Activated T-helper 1 cell treated with anti-CD3 and anti-CD28 coated beads, Interleukin-12 subunit alpha, Interleukin-12 subunit beta, Interleukin-2, Interleukin-4 antibody, amounts not matched to agents 30 ng/mL and 10 ng/mL and 1 ng/mL, durations not matched to agents 14 hours and 24 hours and 36 hours (primary cell): ENCODE measurements at regions of chr9 and their contacts with region 1.

Region 1: GRCh38 chr9:4792572-4793458 is at the start of gene RCL1:
- DNase-seq: peak; percentile 99
- H3K4me3 Mint-ChIP-seq: peak within 1 kb of the TSS; percentile 96
- H3K27ac Mint-ChIP-seq: peak within 1 kb of the TSS; percentile 96
- H3K4me1 Mint-ChIP-seq: peaks cover 62% of the 10 kb centered on the region
- H3K27me3 Mint-ChIP-seq: no peaks in the 10 kb centered on the region
- total RNA-seq, gene RCL1: 53.3 and 53.4 TPM in 2 replicates

Region 2: DNA sequence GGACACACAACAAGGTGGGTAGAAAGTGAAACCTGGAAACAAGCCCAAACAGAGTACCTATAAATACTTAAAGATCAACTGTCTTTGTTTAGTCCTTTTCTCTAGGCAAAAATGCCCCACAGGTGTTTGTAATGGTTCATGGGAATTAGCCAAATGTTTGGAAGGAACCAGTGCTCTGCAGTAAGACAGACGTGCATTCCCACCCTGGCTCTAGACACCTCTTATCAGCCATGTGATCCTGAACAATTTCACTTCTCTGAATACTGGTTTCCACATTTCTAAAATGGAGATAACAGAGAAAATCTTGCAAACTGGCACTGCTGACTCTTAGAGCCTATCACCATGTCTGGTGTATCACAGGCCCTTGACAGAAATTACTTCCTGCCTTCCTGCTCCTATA is 523.0 kb before region 1 on chr9:
- intact Hi-C with region 1: no loop called
- DNase-seq: no peak
- H3K4me3 Mint-ChIP-seq: no peak overlapping the region
- H3K27ac Mint-ChIP-seq: no peak overlapping the region
- H3K4me1 Mint-ChIP-seq: no peaks in the 10 kb centered on the region
- H3K27me3 Mint-ChIP-seq: no peaks in the 10 kb centered on the region

Region 3: DNA sequence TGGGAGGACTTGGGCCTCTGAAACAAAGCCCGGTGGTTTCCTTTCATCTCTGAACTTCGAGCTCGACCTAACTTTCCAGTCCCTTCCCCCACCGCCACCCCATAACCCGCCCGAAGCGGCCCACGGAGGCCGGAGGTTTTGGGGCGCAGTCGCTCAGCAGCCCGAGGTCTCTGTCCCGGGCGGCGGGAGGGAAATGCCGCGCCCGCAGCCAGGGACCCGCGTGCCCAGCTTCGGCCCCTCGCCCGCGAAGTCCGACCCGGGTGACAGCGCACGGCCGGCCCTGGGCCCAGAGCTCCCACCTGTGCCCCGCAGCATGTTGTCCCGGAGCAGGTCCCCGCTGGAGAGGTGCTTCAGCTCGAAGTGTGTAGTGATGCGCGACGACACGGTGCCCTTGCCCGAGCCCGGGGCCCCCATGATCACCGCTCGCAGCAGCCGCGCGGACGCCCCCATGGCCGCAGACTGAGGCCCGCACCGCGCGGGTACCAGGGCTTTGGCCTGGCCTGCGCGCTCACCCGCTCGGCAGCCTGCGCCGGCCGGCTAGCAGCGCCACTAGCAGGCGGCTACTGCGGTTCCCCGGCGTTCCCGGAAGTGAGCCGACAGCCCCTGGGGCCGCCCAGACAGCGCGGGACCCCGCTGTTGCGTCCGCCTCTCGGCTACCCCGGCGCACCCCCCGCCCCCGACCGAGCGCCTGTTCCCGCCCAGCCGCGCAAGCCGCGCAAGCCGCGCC is 52.0 kb before region 1 on chr9 and contains the start of gene AK3:
- intact Hi-C with region 1: loop called (anchors 1 kb)
- DNase-seq: peak; percentile 81
- H3K4me3 Mint-ChIP-seq: peak within 1 kb of the TSS; percentile 89
- H3K27ac Mint-ChIP-seq: peak within 1 kb of the TSS; percentile 92
- H3K4me1 Mint-ChIP-seq: peaks cover 29% of the 10 kb centered on the region
- H3K27me3 Mint-ChIP-seq: no peaks in the 10 kb centered on the region
- total RNA-seq, gene AK3: 23.9 and 28.5 TPM in 2 replicates

Region 4: GRCh38 chr9:4762108-4762885 is 30.5 kb before region 1 on chr9:
- intact Hi-C with region 1: loop called (anchors 1 kb)
- DNase-seq: peak; percentile 72
- H3K4me3 Mint-ChIP-seq: peak overlapping the region; percentile 68
- H3K27ac Mint-ChIP-seq: peak overlapping the region; percentile 65
- H3K4me1 Mint-ChIP-seq: peaks cover 18% of the 10 kb centered on the region
- H3K27me3 Mint-ChIP-seq: no peaks in the 10 kb centered on the region

Region 5: GRCh38 chr9:4866239-4866969 is 73.6 kb after region 1 on chr9:
- intact Hi-C with region 1: loop called (anchors 1 kb)
- DNase-seq: no peak
- H3K4me3 Mint-ChIP-seq: peak overlapping the region; percentile 45
- H3K27ac Mint-ChIP-seq: peak overlapping the region; percentile 90
- H3K4me1 Mint-ChIP-seq: peaks cover 36% of the 10 kb centered on the region
- H3K27me3 Mint-ChIP-seq: no peaks in the 10 kb centered on the region

Region 6: DNA sequence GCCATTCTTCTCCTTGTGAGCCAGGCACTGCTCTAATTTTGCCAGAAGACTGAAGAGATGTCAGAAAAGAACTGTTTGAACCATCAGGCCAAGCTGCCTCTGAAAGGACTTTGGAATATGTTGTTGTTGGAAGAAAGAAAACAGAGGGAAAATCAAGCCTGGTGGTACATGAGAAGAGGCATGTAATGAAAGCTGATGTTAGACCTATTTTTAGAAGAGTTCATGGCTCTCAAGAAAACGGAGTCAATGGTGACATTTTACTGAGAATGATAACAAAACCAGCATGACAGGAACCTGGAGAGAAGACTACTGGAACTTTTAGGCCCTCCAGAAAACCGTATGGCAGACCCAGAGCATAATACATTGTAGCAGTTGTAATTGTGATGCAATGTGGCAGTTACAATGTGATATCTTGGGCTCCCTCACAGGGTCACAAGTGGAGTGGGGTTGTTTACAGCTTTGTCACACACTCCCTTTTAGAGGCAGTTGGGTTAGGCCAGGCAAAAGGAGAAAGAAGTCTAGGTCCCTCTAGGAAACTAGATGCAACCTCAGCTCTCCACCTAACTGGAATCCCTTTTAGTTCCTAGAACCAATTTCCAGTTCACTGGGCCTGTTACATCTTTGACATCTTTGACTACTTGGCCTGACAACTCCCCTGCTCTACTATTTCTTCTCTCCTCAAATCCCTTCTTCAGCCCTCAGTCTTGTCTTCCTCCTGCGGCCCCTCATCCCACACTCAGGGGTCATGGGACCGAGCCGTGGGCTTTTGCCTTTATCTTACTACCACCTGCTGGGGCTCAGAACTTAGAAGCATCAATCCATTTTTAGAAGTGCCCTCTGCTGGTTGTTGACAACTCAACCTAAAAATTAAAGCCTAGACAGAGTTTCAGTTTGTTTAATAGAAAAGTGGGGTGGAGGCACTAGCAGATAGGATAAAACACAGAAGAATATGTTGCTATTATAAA is 131.0 kb after region 1 on chr9:
- intact Hi-C with region 1: loop called (anchors 1 kb)
- DNase-seq: peak; percentile 19
- H3K4me3 Mint-ChIP-seq: no peak overlapping the region
- H3K27ac Mint-ChIP-seq: no peak overlapping the region
- H3K4me1 Mint-ChIP-seq: peaks cover 33% of the 10 kb centered on the region
- H3K27me3 Mint-ChIP-seq: no peaks in the 10 kb centered on the region

Region 7: GRCh38 chr9:4939118-4939561 is 146.3 kb after region 1 on chr9:
- intact Hi-C with region 1: loop called (anchors 2 kb)
- DNase-seq: peak; percentile 33
- H3K4me3 Mint-ChIP-seq: peak overlapping the region; percentile 5
- H3K27ac Mint-ChIP-seq: peak overlapping the region; percentile 74
- H3K4me1 Mint-ChIP-seq: peaks cover 75% of the 10 kb centered on the region
- H3K27me3 Mint-ChIP-seq: no peaks in the 10 kb centered on the region

Region 8: DNA sequence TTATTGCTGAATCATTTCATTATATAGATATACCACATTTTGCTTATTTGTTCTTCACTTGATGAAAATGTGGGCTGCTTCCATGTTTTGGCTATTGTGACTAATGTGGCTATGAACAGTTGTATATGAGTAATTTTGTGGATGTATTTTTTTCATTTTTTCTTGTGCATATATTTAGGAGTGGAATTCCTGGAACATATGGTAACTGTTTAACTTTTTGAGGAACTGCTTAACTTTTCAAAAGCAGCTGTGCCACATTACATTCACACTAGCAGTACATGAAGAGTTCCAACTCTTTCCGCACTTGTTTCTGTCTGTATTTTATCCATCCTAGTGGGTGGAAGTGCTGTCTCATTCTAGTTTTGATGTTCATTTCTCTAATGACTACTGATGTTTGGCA is 260.0 kb after region 1 on chr9:
- intact Hi-C with region 1: no loop called
- DNase-seq: no peak
- H3K4me3 Mint-ChIP-seq: no peak overlapping the region
- H3K27ac Mint-ChIP-seq: no peak overlapping the region
- H3K4me1 Mint-ChIP-seq: peaks cover 20% of the 10 kb centered on the region
- H3K27me3 Mint-ChIP-seq: no peaks in the 10 kb centered on the region